B cell (primary cell): ENCODE measurements at regions of chr1 and their contacts with region 1.

Region 1: GRCh38 chr1:184754476-184755225 is at the start of gene EDEM3:
- DNase-seq: peak; percentile 98
- ATAC-seq: peak; percentile 94
- H3K4me3 ChIP-seq: peak within 1 kb of the TSS; percentile 76 to 98 (median 93)
- H3K4me3 Mint-ChIP-seq: peak within 1 kb of the TSS; percentile 95
- H3K27ac ChIP-seq: peak within 1 kb of the TSS; percentile 68 to 86
- H3K27ac Mint-ChIP-seq: peak within 1 kb of the TSS; percentile 94
- H3K4me1 ChIP-seq: peaks cover 16% of the 10 kb centered on the region in 2 donors
- H3K4me1 Mint-ChIP-seq: peaks cover 26% of the 10 kb centered on the region
- H3K27me3 ChIP-seq: peaks cover 0 to 7% (median 1%) of the 10 kb centered on the region in 4 experiments
- H3K27me3 Mint-ChIP-seq: peaks cover 9% of the 10 kb centered on the region
- CTCF ChIP-seq: no peak
- total RNA-seq, gene EDEM3: 20.9 and 23.1 TPM in 2 replicates

Region 2: GRCh38 chr1:183023601-183024316 is 1730.9 kb before region 1 on chr1:
- CTCF ChIA-PET with region 1: no interaction called
- POLR2A ChIA-PET with region 1: no interaction called
- intact Hi-C with region 1: loop called (anchors 5 kb)
- DNase-seq: peak; percentile 84
- ATAC-seq: peak; percentile 73
- H3K4me3 ChIP-seq: peak overlapping the region; percentile 45 to 82 (median 68)
- H3K4me3 Mint-ChIP-seq: peak overlapping the region; percentile 99
- H3K27ac ChIP-seq: peak overlapping the region in 1 of 2 donors; percentile 20
- H3K27ac Mint-ChIP-seq: peak overlapping the region; percentile 97
- H3K4me1 ChIP-seq: peaks cover 19 to 21% of the 10 kb centered on the region in 2 donors
- H3K4me1 Mint-ChIP-seq: peaks cover 45% of the 10 kb centered on the region
- H3K27me3 ChIP-seq: no peaks in the 10 kb centered on the region
- H3K27me3 Mint-ChIP-seq: no peaks in the 10 kb centered on the region
- CTCF ChIP-seq: peak; percentile 75

Region 3: DNA sequence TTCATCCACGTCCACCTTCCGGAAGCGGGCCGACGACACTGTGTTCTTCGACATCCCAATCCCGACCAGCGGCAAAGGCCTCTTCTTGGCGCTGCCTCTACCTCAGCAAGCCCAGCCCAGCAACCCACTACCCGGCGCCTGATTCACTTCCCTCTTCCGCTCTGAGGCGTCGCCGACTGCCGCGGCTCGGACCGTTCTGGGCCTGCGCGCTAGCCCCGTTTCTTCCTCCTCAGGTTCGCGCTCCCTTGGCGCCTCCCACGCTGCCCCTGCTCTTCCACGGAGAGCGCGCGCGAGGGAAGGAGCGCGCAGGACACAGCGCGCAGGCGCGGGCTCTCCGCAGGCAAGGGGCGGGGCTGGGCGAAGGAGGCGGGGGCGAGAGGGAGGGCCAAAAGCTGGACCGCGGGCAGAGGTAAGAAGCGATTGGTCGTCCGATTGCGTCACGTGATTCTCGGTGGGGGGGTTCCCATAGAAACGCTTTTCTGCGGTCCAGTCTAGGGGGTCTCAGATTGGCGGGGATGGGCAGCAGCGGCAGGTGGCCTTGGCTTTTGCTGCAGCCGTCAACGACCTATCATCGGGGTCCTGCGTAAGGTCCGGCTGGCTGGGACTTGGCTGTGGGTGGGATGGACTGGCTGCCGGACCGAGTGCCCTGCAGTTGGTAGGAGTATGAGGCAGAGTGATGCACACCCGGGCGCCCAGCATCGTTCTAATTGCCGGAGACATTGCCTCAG is 1118.9 kb before region 1 on chr1 and contains the start of gene ARPC5:
- CTCF ChIA-PET with region 1: no interaction called
- POLR2A ChIA-PET with region 1: no interaction called
- intact Hi-C with region 1: loop called (anchors 10 kb)
- DNase-seq: peak; percentile 98
- ATAC-seq: peak; percentile 88
- H3K4me3 ChIP-seq: peak within 1 kb of the TSS; percentile 83 to 95 (median 87)
- H3K4me3 Mint-ChIP-seq: peak within 1 kb of the TSS; percentile 100
- H3K27ac ChIP-seq: peak within 1 kb of the TSS; percentile 59 to 80
- H3K27ac Mint-ChIP-seq: peak within 1 kb of the TSS; percentile 99
- H3K4me1 ChIP-seq: peaks cover 20 to 34% of the 10 kb centered on the region in 2 donors
- H3K4me1 Mint-ChIP-seq: peaks cover 42% of the 10 kb centered on the region
- H3K27me3 ChIP-seq: no peaks in the 10 kb centered on the region
- H3K27me3 Mint-ChIP-seq: no peaks in the 10 kb centered on the region
- CTCF ChIP-seq: no peak
- total RNA-seq, gene ARPC5: 91.9 and 103 TPM in 2 replicates

Region 4: DNA sequence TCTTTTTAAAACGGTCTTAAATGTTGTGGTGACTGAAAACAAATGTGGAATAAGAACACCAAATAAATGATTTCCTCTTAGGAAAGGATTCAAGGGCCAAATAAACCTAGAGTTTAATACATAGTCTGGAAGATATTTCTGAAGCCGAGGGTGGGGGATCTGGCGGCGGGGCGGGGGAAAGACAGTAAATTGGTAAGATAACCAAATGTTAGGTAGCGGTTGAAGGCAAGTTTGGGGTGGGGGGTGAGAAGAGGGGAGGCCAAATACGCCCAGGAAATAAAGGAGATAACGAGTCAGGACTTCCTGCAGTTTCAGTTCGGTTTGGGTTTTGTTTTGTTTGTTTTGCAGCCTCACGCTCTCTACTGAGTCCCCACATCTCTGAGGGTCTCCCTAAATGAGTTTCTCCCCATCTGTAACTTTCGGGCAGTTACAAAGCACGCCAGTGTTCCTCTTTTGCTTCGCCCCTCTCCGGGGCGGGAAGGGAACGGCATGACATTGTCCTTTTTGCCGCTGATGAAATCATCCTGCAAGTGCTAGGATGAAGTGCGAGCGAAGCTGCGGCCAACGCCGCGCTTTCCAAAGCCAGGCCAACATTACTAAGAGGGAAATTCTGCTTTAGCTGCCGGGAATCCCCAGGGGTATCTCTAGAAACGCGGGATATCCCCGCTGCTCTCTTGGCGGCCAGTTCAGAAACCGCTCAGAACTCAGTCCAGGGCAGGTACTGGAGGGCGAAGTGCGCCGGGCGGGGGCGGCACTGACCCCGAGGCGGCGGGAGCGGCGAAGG is 218.8 kb after region 1 on chr1:
- CTCF ChIA-PET with region 1: no interaction called
- POLR2A ChIA-PET with region 1: no interaction called
- intact Hi-C with region 1: loop called (anchors 1 kb)
- DNase-seq: peak; percentile 69
- ATAC-seq: peak; percentile 39
- H3K4me3 ChIP-seq: peak overlapping the region; percentile 57 to 85 (median 61)
- H3K4me3 Mint-ChIP-seq: peak overlapping the region; percentile 96
- H3K27ac ChIP-seq: peak overlapping the region; percentile 21 to 54
- H3K27ac Mint-ChIP-seq: peak overlapping the region; percentile 85
- H3K4me1 ChIP-seq: peaks cover 5 to 17% of the 10 kb centered on the region in 2 donors
- H3K4me1 Mint-ChIP-seq: peaks cover 40% of the 10 kb centered on the region
- H3K27me3 ChIP-seq: peaks cover 0 to 11% (median 9%) of the 10 kb centered on the region in 4 experiments
- H3K27me3 Mint-ChIP-seq: peaks cover 10% of the 10 kb centered on the region
- CTCF ChIP-seq: no peak

Region 5: GRCh38 chr1:185044981-185045813 is 290.5 kb after region 1 on chr1 and contains the start of gene RNF2:
- CTCF ChIA-PET with region 1: no interaction called
- POLR2A ChIA-PET with region 1: interaction called, 9 read pairs
- intact Hi-C with region 1: loop called (anchors 1 kb)
- DNase-seq: peak; percentile 93
- ATAC-seq: peak; percentile 92
- H3K4me3 ChIP-seq: peak within 1 kb of the TSS; percentile 77 to 96 (median 89)
- H3K4me3 Mint-ChIP-seq: peak within 1 kb of the TSS; percentile 87
- H3K27ac ChIP-seq: peak within 1 kb of the TSS; percentile 72 to 82
- H3K27ac Mint-ChIP-seq: peak within 1 kb of the TSS; percentile 93
- H3K4me1 ChIP-seq: peaks cover 16 to 18% of the 10 kb centered on the region in 2 donors
- H3K4me1 Mint-ChIP-seq: peaks cover 35% of the 10 kb centered on the region
- H3K27me3 ChIP-seq: no peaks in the 10 kb centered on the region
- H3K27me3 Mint-ChIP-seq: no peaks in the 10 kb centered on the region
- CTCF ChIP-seq: no peak
- total RNA-seq, gene RNF2: 24.2 and 29.5 TPM in 2 replicates

Region 6: DNA sequence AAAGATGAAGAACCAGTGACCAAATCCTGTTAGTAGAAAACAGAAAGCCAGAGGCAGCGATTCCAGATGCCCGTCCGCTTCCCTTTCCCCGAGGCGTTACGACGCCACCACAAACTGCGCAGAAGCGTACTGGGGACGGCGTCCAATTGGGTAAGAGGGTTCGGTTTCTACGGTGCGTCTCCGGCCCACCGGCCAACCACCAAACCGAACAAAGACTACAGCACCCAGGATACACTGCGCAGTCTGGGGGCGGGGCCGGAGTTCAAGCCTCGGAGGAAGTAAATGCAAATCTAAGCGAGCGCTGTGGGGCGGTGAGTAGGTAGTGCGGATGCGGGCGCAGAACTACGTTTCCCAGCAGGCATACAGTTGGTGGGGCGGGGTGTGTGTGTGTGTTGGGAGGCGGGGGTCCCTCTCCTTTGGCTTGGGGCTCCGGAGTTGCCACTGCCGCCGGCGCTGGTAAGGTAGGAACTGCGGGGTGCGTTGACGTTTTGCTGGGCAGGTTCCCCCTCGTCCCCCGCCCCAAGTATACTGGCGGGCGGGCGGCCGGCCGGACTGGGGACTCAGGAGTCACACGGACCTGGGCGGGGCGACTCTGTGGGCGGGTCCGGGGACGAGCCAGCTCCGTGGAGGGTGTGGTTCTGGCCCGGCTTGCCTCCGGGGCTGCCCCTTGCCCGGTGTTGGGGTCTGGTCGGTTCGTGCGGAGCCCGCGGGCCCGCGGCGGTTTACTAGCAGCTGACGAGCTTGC is 402.4 kb after region 1 on chr1 and contains the starts of genes SWT1 and TRMT1L:
- CTCF ChIA-PET with region 1: no interaction called
- POLR2A ChIA-PET with region 1: interaction called, 4 read pairs
- intact Hi-C with region 1: loop called (anchors 1 kb)
- DNase-seq: peak; percentile 100
- ATAC-seq: peak; percentile 83
- H3K4me3 ChIP-seq: peak within 1 kb of the TSS; percentile 80 to 99 (median 98)
- H3K4me3 Mint-ChIP-seq: peak within 1 kb of the TSS; percentile 93
- H3K27ac ChIP-seq: peak within 1 kb of the TSS; percentile 98 to 100
- H3K27ac Mint-ChIP-seq: peak within 1 kb of the TSS; percentile 97
- H3K4me1 ChIP-seq: peaks cover 11 to 36% of the 10 kb centered on the region in 2 donors
- H3K4me1 Mint-ChIP-seq: peaks cover 44% of the 10 kb centered on the region
- H3K27me3 ChIP-seq: no peaks in the 10 kb centered on the region
- H3K27me3 Mint-ChIP-seq: no peaks in the 10 kb centered on the region
- CTCF ChIP-seq: no peak
- total RNA-seq, gene SWT1: 8.5 and 9.2 TPM in 2 replicates
- total RNA-seq, gene TRMT1L: 27.5 and 33.2 TPM in 2 replicates

Region 7: GRCh38 chr1:185603158-185603557 is 848.5 kb after region 1 on chr1:
- CTCF ChIA-PET with region 1: no interaction called
- POLR2A ChIA-PET with region 1: no interaction called
- intact Hi-C with region 1: loop called (anchors 1 kb)
- DNase-seq: peak; percentile 86
- ATAC-seq: peak; percentile 93
- H3K4me3 ChIP-seq: peak overlapping the region in 1 of 5 experiments; percentile 42
- H3K4me3 Mint-ChIP-seq: no peak overlapping the region
- H3K27ac ChIP-seq: peak overlapping the region; percentile 27 to 56
- H3K27ac Mint-ChIP-seq: no peak overlapping the region
- H3K4me1 ChIP-seq: peaks cover 54 to 68% of the 10 kb centered on the region in 2 donors
- H3K4me1 Mint-ChIP-seq: peaks cover 31% of the 10 kb centered on the region
- H3K27me3 ChIP-seq: no peaks in the 10 kb centered on the region
- H3K27me3 Mint-ChIP-seq: no peaks in the 10 kb centered on the region
- CTCF ChIP-seq: no peak